ENCODE measurements at regions of chr10 and their contacts with region 1.

Region 1: DNA sequence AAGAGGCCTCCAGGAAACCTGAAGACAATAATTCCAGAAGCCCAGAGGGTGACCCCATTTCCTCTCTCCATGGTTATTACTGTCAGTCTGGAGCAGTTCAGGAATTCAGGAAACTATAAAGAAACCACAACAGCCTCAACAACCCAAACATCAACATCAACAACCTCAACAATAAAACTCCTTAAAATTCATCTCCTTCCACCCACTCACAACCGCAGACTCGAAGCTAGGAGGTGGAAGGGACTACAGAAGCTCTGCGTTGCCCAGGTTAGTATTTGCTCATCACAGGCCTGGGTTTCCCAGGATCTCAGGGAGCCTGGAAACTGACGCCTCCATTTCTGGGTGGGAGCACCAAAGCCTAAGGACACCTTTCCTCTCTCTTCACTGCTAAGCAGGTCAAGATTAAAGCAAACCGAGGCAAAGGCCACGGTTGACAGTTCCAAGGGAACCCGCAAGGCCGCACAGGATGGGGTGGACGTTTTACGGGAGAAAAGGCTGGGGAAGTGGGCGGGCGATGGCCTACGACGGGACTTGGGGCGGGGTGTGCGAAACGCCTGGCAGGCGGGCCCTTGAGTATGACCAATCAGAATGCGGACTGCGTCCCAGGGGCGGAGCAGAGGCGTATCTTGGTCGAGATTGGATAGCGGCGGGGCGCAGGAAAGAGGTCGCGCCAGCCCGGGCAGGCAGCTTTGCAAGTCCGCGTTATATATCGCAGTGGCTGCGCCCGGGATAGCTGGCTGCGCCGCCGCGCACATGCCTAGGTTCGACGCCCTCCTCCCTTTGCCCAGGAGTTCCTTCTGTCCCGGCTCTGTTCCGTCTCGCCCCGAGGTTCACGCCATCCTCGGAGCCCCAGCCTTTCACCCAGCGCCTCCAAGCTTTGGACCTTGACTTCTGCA is at the start of gene ELOVL3:
- DNase-seq: peak; percentile 98
- H3K4me3 ChIP-seq: peak within 1 kb of the TSS in 1 of 2 experiments; percentile 31; a peak in 1 of 4 replicates
- H3K27ac ChIP-seq: no peak within 1 kb of the TSS; a peak in 1 of 4 replicates
- H3K4me1 ChIP-seq: peaks cover 0 to 18% of the 10 kb centered on the region in 2 experiments; a peak in 2 of 4 replicates
- H3K27me3 ChIP-seq: peaks cover 17% of the 10 kb centered on the region; the same call in 1 of the 2 replicates
- CTCF ChIP-seq: no peak
- EP300 ChIP-seq: no peak
- RAD21 ChIP-seq: no peak
- polyA plus RNA-seq, gene ELOVL3: 0.25 and 0.29 TPM in 2 replicates

Region 2: GRCh38 chr10:102072673-102073527 is 153.0 kb before region 1 on chr10:
- CTCF ChIA-PET with region 1: no interaction called
- POLR2A ChIA-PET with region 1: no interaction called
- DNase-seq: peak; percentile 78
- H3K4me3 ChIP-seq: no peak overlapping the region
- H3K27ac ChIP-seq: no peak overlapping the region
- H3K4me1 ChIP-seq: peaks cover 0 to 4% of the 10 kb centered on the region in 2 experiments; a peak in 2 of 4 replicates
- H3K27me3 ChIP-seq: no peaks in the 10 kb centered on the region
- CTCF ChIP-seq: peak; percentile 92
- EP300 ChIP-seq: no peak
- RAD21 ChIP-seq: peak; percentile 84

Region 3: GRCh38 chr10:102167861-102168260 is 58.0 kb before region 1 on chr10:
- CTCF ChIA-PET with region 1: interaction called, 94 read pairs
- POLR2A ChIA-PET with region 1: no interaction called
- DNase-seq: no peak
- H3K4me3 ChIP-seq: no peak overlapping the region
- H3K27ac ChIP-seq: no peak overlapping the region
- H3K4me1 ChIP-seq: no peaks in the 10 kb centered on the region
- H3K27me3 ChIP-seq: no peaks in the 10 kb centered on the region
- CTCF ChIP-seq: no peak
- EP300 ChIP-seq: no peak
- RAD21 ChIP-seq: no peak

Region 4: DNA sequence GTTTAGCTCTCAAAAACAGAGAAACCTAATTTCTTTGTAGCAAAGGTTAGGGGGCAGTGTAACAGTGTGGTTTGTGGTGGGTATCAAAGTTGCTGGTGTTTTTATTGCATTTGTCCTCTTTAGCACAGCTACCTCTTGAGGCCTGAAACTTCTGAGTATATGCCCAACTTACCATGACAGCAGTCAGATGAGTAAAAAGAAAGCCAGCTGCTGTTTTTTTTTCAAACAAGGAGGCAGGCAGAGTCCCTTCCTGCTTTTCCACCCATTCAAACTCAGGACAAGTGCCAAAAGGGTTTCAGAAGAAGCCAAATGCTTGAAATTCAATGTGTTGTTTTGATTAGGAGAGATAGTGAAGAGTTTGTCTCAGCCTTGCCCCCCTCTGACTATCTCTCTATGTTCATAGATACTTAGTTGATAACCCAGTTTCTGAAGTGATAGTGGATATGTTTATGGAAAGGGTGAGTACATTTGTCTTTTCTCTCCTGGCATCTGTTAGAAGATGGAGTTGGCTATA is 42.5 kb after region 1 on chr10:
- CTCF ChIA-PET with region 1: interaction called, 14 read pairs
- POLR2A ChIA-PET with region 1: no interaction called
- DNase-seq: no peak
- H3K4me3 ChIP-seq: no peak overlapping the region
- H3K27ac ChIP-seq: peak overlapping the region; percentile 30 to 56; a peak in 3 of 4 replicates
- H3K4me1 ChIP-seq: peaks cover 8 to 18% of the 10 kb centered on the region in 2 experiments; a peak in 3 of 4 replicates
- H3K27me3 ChIP-seq: no peaks in the 10 kb centered on the region
- CTCF ChIP-seq: peak; percentile 32
- EP300 ChIP-seq: no peak
- RAD21 ChIP-seq: no peak

Region 5: GRCh38 chr10:102327002-102327401 is 101.1 kb after region 1 on chr10:
- CTCF ChIA-PET with region 1: interaction called, 10 read pairs
- POLR2A ChIA-PET with region 1: no interaction called
- DNase-seq: no peak
- H3K4me3 ChIP-seq: no peak overlapping the region
- H3K27ac ChIP-seq: no peak overlapping the region
- H3K4me1 ChIP-seq: no peaks in the 10 kb centered on the region; a peak in 1 of 4 replicates
- H3K27me3 ChIP-seq: no peaks in the 10 kb centered on the region
- CTCF ChIP-seq: no peak
- EP300 ChIP-seq: no peak
- RAD21 ChIP-seq: no peak

Region 6: GRCh38 chr10:102352066-102352715 is 126.3 kb after region 1 on chr10:
- CTCF ChIA-PET with region 1: interaction called, 824 read pairs
- POLR2A ChIA-PET with region 1: interaction called, 6 read pairs
- DNase-seq: peak; percentile 78
- H3K4me3 ChIP-seq: no peak overlapping the region; a peak in 1 of 4 replicates
- H3K27ac ChIP-seq: no peak overlapping the region
- H3K4me1 ChIP-seq: no peaks in the 10 kb centered on the region
- H3K27me3 ChIP-seq: no peaks in the 10 kb centered on the region
- CTCF ChIP-seq: peak; percentile 96
- EP300 ChIP-seq: no peak
- RAD21 ChIP-seq: peak; percentile 83

Region 7: GRCh38 chr10:102384053-102384452 is 158.2 kb after region 1 on chr10:
- CTCF ChIA-PET with region 1: interaction called, 19 read pairs
- POLR2A ChIA-PET with region 1: no interaction called
- DNase-seq: no peak
- H3K4me3 ChIP-seq: no peak overlapping the region
- H3K27ac ChIP-seq: no peak overlapping the region
- H3K4me1 ChIP-seq: no peaks in the 10 kb centered on the region; a peak in 1 of 4 replicates
- H3K27me3 ChIP-seq: no peaks in the 10 kb centered on the region
- CTCF ChIP-seq: peak; percentile 18; the same call in 1 of the 2 replicates
- EP300 ChIP-seq: no peak
- RAD21 ChIP-seq: no peak

Region 8: DNA sequence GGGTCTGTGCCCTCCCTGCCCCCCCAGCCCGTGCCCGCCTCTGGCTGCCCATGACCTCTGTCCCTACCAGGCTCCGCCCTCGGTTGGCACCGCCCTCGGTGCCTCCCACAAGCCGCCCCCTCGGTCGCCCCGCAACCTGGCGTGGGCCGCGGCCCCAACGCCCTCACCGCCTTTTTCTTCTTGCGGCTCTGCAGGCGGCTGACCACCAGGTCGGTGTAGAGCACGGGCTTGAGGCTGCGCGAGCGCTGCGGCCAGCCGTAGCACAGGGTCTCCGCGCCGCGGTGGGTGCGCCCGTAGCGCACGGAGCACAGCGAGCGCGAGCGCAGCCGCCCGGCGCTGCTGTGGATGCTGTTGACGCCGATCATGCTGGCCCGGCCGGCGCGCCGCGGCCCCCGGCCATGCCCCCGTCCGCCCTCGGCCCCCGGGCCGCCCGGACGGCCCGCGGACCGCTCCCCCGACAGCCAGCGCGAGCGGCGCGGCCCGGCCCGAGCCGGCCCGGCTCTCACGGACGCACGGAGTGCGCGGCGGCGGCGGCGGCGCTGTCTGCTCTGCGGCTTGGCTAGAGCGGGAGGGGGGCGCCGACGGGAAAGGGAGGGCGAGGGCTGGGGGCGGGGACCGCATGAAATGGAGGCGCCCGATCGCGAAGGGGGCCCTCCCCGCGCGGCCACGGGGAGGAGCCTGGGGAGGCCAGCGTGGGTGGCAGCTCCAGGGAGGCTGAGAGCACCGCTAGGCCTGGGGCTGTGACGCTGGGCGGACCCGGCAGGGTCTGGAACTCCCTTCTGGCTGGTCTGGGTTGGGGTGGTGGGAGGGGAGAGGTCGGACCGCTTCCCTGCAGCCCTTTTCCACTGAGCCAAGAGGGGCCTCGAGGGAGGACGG is 183.1 kb after region 1 on chr10:
- CTCF ChIA-PET with region 1: interaction called, 29 read pairs
- POLR2A ChIA-PET with region 1: no interaction called
- DNase-seq: peak; percentile 91
- H3K4me3 ChIP-seq: peak overlapping the region; percentile 51 to 61
- H3K27ac ChIP-seq: peak overlapping the region in 1 of 2 experiments; percentile 56; a peak in 2 of 4 replicates
- H3K4me1 ChIP-seq: peaks cover 0 to 31% of the 10 kb centered on the region in 2 experiments; a peak in 2 of 4 replicates
- H3K27me3 ChIP-seq: no peaks in the 10 kb centered on the region
- CTCF ChIP-seq: no peak
- EP300 ChIP-seq: no peak
- RAD21 ChIP-seq: no peak

Measured in SK-N-SH (cell line).